ENCODE measurements at regions of chr5 and their contacts with region 1.

Region 1: GRCh38 chr5:135053278-135053677 is 19.2 kb upstream of the PITX1 start:
- DNase-seq: no peak
- ATAC-seq: no peak
- H3K4me3 ChIP-seq: no peak overlapping the region
- H3K27ac ChIP-seq: no peak overlapping the region
- H3K4me1 ChIP-seq: peaks cover 15 to 22% of the 10 kb centered on the region in 2 donors
- H3K27me3 ChIP-seq: peaks cover 0 to 4% (median 0%) of the 10 kb centered on the region in 3 donors
- CTCF ChIP-seq: no peak
- POLR2A ChIP-seq: no peak

Region 2: DNA sequence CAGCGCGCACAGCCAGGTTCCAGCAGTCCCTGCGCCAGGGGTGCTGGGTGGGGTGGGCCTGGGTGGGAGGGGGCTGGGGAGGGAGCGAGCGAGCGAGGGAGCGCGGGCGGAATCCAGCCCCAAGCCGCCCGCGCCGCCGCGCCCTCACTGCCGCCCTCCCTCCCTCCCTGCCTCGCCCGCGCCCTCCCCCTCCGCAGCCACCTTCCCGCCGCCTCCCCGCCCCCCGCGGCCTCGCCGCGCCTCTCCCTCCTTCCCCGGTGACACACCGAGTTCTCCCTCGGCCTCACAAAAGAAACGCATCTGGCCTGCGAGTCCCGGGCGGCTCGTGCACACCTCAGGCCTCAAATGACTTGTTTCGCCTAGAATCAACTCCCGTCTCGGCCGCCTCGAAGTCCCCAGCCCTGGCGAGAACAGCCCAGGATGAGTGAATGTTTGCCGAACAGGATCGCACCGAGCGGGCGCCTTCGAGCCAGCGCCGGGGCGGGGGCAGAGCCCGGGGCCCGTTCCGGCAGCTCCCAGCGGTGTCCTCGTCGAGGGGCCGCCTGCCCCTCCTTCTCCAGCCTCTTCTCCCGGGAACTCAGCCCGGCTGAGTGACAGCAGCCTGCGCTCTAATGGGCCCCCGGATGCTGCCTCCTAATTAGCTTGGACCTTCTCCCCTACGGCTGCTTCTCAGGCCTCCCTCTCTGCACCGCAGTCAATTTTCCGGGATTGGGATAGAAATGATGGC is 18.9 kb before region 1 on chr5:
- in situ Hi-C with region 1: no loop called
- intact Hi-C with region 1: loop called (anchors 2 kb)
- DNase-seq: no peak
- ATAC-seq: peak; percentile 20 to 43
- H3K4me3 ChIP-seq: peak overlapping the region; percentile 41 to 53 (median 52)
- H3K27ac ChIP-seq: peak overlapping the region in 3 of 4 donors; percentile 56 to 78 (median 62)
- H3K4me1 ChIP-seq: peaks cover 25 to 26% of the 10 kb centered on the region in 2 donors
- H3K27me3 ChIP-seq: peaks cover 75 to 86% (median 84%) of the 10 kb centered on the region in 3 donors
- CTCF ChIP-seq: no peak
- POLR2A ChIP-seq: no peak

Region 3: DNA sequence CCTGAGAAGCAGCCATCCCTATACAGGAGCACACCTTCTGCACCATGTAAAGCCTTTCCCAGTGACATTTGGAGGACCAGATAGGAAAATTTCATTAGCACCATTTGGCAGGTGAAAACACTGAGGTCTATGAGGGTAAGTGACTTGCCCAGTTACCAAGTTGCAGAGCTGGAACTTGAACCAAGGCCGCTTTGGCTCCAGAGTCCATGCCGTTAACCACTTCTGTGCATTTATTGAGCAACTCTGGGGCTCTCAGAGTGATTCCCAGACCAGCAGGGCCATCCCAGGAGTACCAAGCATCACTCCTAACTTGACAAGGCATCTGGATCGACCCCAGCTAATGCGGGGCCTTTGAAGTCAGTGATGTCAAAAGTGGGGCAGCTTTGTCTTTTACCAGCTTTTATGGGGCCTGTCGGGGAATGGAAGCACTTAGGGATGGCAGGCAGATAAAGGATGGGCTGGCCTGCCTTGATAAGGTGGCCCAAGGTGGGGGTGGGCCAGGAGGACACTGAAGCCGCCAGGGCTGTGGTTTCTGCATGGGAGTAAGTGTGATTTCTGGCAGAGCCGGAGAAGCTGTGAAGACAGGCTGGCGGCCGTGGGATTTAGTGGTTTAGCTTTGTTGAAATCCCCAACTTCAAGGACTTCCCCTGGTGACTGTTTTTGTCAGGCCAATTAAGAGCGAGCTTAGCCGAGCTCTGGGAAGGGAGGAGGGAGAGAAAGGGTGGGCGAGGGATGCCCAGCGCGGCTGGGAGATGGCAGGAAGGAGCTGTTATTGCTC is 218.4 kb after region 1 on chr5:
- in situ Hi-C with region 1: no loop called
- intact Hi-C with region 1: loop called (anchors 10 kb)
- DNase-seq: peak in 1 of 2 donors; percentile 32
- ATAC-seq: peak in 1 of 2 donors; percentile 6
- H3K4me3 ChIP-seq: no peak overlapping the region
- H3K27ac ChIP-seq: peak overlapping the region; percentile 37 to 78 (median 48)
- H3K4me1 ChIP-seq: peaks cover 27 to 31% of the 10 kb centered on the region in 2 donors
- H3K27me3 ChIP-seq: no peaks in the 10 kb centered on the region
- CTCF ChIP-seq: no peak
- POLR2A ChIP-seq: no peak

Measured in gastrocnemius medialis (tissue), 4 donors.